ENCODE measurements at regions of chr6 and their contacts with region 1.

Region 1: GRCh38 chr6:36442671-36443470 is at the starts of genes KCTD20 and PXT1:
- DNase-seq: peak; percentile 96 to 98 (median 97)
- ATAC-seq: peak; percentile 85
- H3K4me3 ChIP-seq: peak within 1 kb of the TSS; percentile 91
- H3K27ac ChIP-seq: peak within 1 kb of the TSS; percentile 89
- H3K4me1 ChIP-seq: peaks cover 20 to 31% of the 10 kb centered on the region in 2 experiments
- H3K27me3 ChIP-seq: no peaks in the 10 kb centered on the region
- CTCF ChIP-seq: no peak; a peak in 2 of 6 replicates
- EP300 ChIP-seq: peak; percentile 75
- POLR2A ChIP-seq: peak; percentile 96
- RAD21 ChIP-seq: peak; percentile 18 to 45; a peak in 3 of 4 replicates
- polyA plus RNA-seq, gene KCTD20: 28.9 to 30.0 TPM
- polyA plus RNA-seq, gene PXT1: not detected

Region 2: GRCh38 chr6:36350681-36351571 is 91.9 kb before region 1 on chr6:
- CTCF ChIA-PET with region 1: no interaction called
- POLR2A ChIA-PET with region 1: no interaction called
- in situ Hi-C with region 1: no loop called
- intact Hi-C with region 1: no loop called
- DNase-seq: peak; percentile 67 to 88 (median 73)
- ATAC-seq: peak; percentile 72
- H3K4me3 ChIP-seq: no peak overlapping the region
- H3K27ac ChIP-seq: no peak overlapping the region
- H3K4me1 ChIP-seq: peaks cover 27 to 33% of the 10 kb centered on the region in 2 experiments
- H3K27me3 ChIP-seq: no peaks in the 10 kb centered on the region
- CTCF ChIP-seq: no peak
- EP300 ChIP-seq: peak; percentile 92
- POLR2A ChIP-seq: no peak
- RAD21 ChIP-seq: peak; percentile 5 to 14; a peak in 1 of 4 replicates

Region 3: GRCh38 chr6:36423101-36423824 is 19.6 kb before region 1 on chr6:
- CTCF ChIA-PET with region 1: interaction called, 7 read pairs
- POLR2A ChIA-PET with region 1: interaction called, 22 read pairs
- in situ Hi-C with region 1: no loop called
- intact Hi-C with region 1: loop called (anchors 1 kb)
- DNase-seq: peak; percentile 99 to 100 (median 100)
- ATAC-seq: peak; percentile 96
- H3K4me3 ChIP-seq: peak overlapping the region; percentile 32
- H3K27ac ChIP-seq: peak overlapping the region; percentile 75
- H3K4me1 ChIP-seq: peaks cover 13 to 15% of the 10 kb centered on the region in 2 experiments; a peak in 4 of 5 replicates
- H3K27me3 ChIP-seq: no peaks in the 10 kb centered on the region
- CTCF ChIP-seq: peak; percentile 90 to 95 (median 94)
- EP300 ChIP-seq: peak; percentile 49
- POLR2A ChIP-seq: peak; percentile 90
- RAD21 ChIP-seq: peak; percentile 96 to 98

Region 4: DNA sequence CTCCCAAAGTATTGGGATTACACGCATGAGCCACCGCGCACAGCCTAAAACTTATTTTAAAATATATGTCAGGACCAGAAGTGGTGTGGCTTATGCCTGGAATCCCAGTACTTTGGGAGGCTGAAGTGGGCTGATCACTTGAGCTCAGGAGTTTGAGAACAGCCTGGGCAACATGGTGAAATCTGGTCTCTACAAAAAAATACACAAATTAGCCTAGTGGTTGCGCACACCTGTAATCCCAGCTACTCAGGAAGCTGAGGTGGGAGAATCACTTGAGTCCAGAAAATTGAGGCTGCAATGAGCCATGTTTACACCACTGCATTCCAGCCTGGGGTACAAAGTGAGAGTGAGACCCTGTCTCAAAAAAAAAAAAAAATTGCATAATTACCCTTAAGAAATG is 14.0 kb before region 1 on chr6:
- CTCF ChIA-PET with region 1: no interaction called
- POLR2A ChIA-PET with region 1: interaction called, 22 read pairs
- in situ Hi-C with region 1: no loop called
- intact Hi-C with region 1: no loop called
- DNase-seq: no peak
- ATAC-seq: no peak
- H3K4me3 ChIP-seq: no peak overlapping the region
- H3K27ac ChIP-seq: no peak overlapping the region
- H3K4me1 ChIP-seq: peaks cover 5 to 13% of the 10 kb centered on the region in 2 experiments; a peak in 3 of 5 replicates
- H3K27me3 ChIP-seq: no peaks in the 10 kb centered on the region
- CTCF ChIP-seq: no peak
- EP300 ChIP-seq: no peak
- POLR2A ChIP-seq: no peak
- RAD21 ChIP-seq: no peak

Region 5: GRCh38 chr6:36463676-36464075 is 20.8 kb after region 1 on chr6:
- CTCF ChIA-PET with region 1: no interaction called
- POLR2A ChIA-PET with region 1: interaction called, 12 read pairs
- in situ Hi-C with region 1: no loop called
- intact Hi-C with region 1: no loop called
- DNase-seq: no peak
- ATAC-seq: no peak; the same call in 2 of the 3 replicates
- H3K4me3 ChIP-seq: no peak overlapping the region
- H3K27ac ChIP-seq: no peak overlapping the region
- H3K4me1 ChIP-seq: no peaks in the 10 kb centered on the region; a peak in 3 of 5 replicates
- H3K27me3 ChIP-seq: no peaks in the 10 kb centered on the region
- CTCF ChIP-seq: no peak
- EP300 ChIP-seq: no peak
- POLR2A ChIP-seq: no peak
- RAD21 ChIP-seq: no peak

Region 6: DNA sequence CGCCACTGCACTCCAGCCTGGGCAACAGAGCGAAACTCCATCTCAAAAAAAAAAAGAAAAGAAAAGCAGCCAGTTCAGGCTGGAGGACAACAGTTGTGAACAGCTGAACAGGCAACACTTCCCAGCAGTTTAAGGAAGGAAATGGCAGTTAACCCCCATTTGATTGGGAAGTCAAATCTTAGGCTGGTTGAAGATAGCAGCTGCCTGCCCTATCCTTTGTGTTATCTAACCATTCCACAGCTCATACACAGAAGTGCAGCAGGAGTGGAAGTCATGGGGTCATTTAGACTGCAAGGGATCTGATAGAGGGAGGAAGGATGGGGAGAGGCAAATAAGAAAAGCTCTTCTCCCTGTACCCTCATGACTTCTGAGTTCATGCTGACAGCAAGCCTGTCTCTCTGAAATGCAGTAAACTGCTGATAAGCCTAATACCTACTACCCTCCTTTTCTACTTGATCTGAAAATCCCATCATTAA is 35.2 kb after region 1 on chr6:
- CTCF ChIA-PET with region 1: no interaction called
- POLR2A ChIA-PET with region 1: interaction called, 11 read pairs
- in situ Hi-C with region 1: no loop called
- intact Hi-C with region 1: loop called (anchors 5 kb)
- DNase-seq: peak; percentile 75 to 92 (median 80)
- ATAC-seq: peak; percentile 94
- H3K4me3 ChIP-seq: peak overlapping the region; percentile 3; the same call in 1 of the 2 replicates
- H3K27ac ChIP-seq: peak overlapping the region; percentile 24; the same call in 2 of the 3 replicates
- H3K4me1 ChIP-seq: peaks cover 12 to 15% of the 10 kb centered on the region in 2 experiments
- H3K27me3 ChIP-seq: no peaks in the 10 kb centered on the region
- CTCF ChIP-seq: no peak
- EP300 ChIP-seq: peak; percentile 92
- POLR2A ChIP-seq: no peak
- RAD21 ChIP-seq: no peak

Region 7: DNA sequence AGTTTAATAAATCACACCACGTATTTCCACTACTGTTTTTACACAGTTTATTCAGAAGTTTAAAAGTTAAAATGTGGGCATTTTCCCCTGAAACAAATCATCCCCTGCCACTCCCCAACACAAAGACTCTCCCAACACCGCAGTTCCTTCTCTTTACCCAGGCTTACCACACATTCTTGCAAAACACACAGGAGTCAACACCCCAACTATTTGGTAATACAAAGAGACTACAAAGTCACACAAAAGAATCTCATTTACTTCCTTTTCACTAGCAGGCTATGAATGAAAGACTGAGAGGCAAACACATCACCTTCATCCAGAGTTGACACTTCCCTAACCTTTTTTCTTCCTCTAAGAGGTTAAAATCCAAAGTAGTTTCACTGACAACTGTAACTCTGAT is 51.0 kb after region 1 on chr6:
- CTCF ChIA-PET with region 1: no interaction called
- POLR2A ChIA-PET with region 1: no interaction called
- in situ Hi-C with region 1: no loop called
- intact Hi-C with region 1: no loop called
- DNase-seq: no peak
- ATAC-seq: no peak
- H3K4me3 ChIP-seq: no peak overlapping the region
- H3K27ac ChIP-seq: no peak overlapping the region
- H3K4me1 ChIP-seq: no peaks in the 10 kb centered on the region
- H3K27me3 ChIP-seq: no peaks in the 10 kb centered on the region
- CTCF ChIP-seq: no peak
- EP300 ChIP-seq: no peak
- POLR2A ChIP-seq: no peak
- RAD21 ChIP-seq: no peak

Region 8: GRCh38 chr6:36546920-36547645 is 104.2 kb after region 1 on chr6 and contains the start of gene STK38:
- CTCF ChIA-PET with region 1: no interaction called
- POLR2A ChIA-PET with region 1: no interaction called
- in situ Hi-C with region 1: no loop called
- intact Hi-C with region 1: loop called (anchors 5 kb)
- DNase-seq: peak; percentile 96 to 100 (median 100)
- ATAC-seq: peak; percentile 93
- H3K4me3 ChIP-seq: peak within 1 kb of the TSS; percentile 92
- H3K27ac ChIP-seq: peak within 1 kb of the TSS; percentile 90
- H3K4me1 ChIP-seq: peaks cover 23 to 24% of the 10 kb centered on the region in 2 experiments
- H3K27me3 ChIP-seq: no peaks in the 10 kb centered on the region
- CTCF ChIP-seq: peak; percentile 4 to 36 (median 14); a peak in 2 of 6 replicates
- EP300 ChIP-seq: 0 out of 2 replicates have a peak, but pooled peaks have one; percentile 18
- POLR2A ChIP-seq: peak; percentile 97
- RAD21 ChIP-seq: peak; percentile 1 to 16; a peak in 1 of 4 replicates
- polyA plus RNA-seq, gene STK38: 5.7 to 8.8 TPM

Measured in K562 (cell line).